Stomach (tissue), 19 donors: ENCODE measurements at regions of chr1 and their contacts with region 1.

Region 1: GRCh38 chr1:165914136-165914798 is 86.9 kb downstream of the UCK2 start:
- DNase-seq: peak; percentile 73 to 93
- H3K4me3 ChIP-seq: no peak overlapping the region
- H3K27ac ChIP-seq: peak overlapping the region in 2 of 5 donors; percentile 56 to 71
- H3K4me1 ChIP-seq: peaks cover 36 to 65% (median 44%) of the 10 kb centered on the region in 4 donors
- H3K27me3 ChIP-seq: no peaks in the 10 kb centered on the region
- CTCF ChIP-seq: peak in 5 of 7 experiments; percentile 68 to 90 (median 86)
- EP300 ChIP-seq: no peak
- POLR2A ChIP-seq: no peak

Region 2: DNA sequence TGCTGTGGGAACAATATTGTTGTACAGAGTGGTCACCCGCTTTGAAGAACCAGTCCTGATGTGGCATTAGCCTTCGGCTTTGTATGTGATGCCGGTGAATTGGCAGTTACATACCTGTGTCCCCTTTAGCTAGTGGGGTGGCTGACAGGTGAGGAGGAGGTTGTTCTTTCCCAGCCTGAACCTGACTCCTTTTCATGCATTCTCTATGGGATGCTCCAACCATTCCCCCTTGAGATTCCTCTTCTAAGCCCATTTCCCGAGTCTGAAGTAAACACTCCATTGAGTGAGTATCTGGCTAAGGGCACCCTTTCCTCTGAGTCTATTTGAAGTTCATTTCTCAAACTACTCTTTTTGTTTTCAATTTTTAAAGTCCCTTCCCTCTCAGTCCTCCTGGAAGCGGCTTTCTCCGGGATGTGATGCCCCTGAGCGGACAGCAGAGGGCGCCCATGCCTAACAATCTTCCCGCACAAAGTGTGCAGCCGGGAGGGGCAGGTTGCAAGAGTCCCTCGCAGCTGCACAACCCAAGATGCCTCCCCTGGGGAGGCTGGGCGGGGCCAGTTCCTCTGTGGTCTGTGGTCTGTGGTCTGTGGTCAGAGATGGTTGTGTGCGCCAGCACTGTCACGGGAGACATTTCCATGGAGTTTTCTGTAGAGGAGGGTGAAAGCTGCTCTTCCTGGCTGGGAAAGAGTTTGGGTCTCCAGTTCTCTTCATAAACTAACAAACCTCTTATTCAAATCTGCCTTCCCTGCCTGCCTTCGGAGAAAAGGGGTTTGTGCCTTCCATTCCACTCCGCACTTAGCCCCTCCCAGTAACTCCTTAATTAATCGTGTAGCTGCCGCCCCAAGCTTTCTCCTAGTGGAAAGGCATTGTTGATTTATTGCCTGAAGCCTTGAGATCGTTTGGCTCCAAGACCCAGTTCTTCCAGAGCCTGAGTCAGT is 521.4 kb before region 1 on chr1:
- intact Hi-C with region 1: loop called (anchors 10 kb)
- DNase-seq: peak; percentile 76 to 93
- H3K4me3 ChIP-seq: peak overlapping the region; percentile 8 to 19 (median 13)
- H3K27ac ChIP-seq: peak overlapping the region in 1 of 5 donors; percentile 11
- H3K4me1 ChIP-seq: peaks cover 0 to 17% (median 14%) of the 10 kb centered on the region in 4 donors
- H3K27me3 ChIP-seq: peaks cover 0 to 50% (median 5%) of the 10 kb centered on the region in 3 donors
- CTCF ChIP-seq: peak in 5 of 7 experiments; percentile 72 to 92 (median 91)
- EP300 ChIP-seq: no peak
- POLR2A ChIP-seq: no peak

Region 3: DNA sequence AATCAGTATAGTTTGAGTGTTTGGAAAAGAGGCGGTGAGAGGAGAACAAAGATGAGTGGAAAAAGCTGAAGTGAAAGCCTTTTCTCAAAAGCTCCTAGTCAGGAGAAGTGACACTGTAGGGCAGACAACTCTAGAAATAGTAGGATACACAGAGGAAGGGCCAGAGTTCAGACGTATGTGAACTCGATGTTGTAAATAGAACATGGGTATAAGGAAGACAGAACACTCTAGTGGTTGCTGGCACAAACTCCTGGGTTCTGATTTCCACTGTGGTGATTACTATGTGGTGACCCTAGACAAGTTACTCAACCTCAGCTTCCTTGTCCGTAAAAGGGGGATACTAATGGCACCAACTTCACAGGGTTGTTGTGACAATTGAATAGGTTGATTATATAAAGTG is 313.5 kb before region 1 on chr1:
- intact Hi-C with region 1: loop called (anchors 5 kb)
- DNase-seq: no peak
- H3K4me3 ChIP-seq: no peak overlapping the region
- H3K27ac ChIP-seq: no peak overlapping the region
- H3K4me1 ChIP-seq: peaks cover 5 to 29% (median 14%) of the 10 kb centered on the region in 4 donors
- H3K27me3 ChIP-seq: no peaks in the 10 kb centered on the region
- CTCF ChIP-seq: no peak
- EP300 ChIP-seq: no peak
- POLR2A ChIP-seq: no peak

Region 4: GRCh38 chr1:165726169-165726568 is 188.1 kb before region 1 on chr1:
- intact Hi-C with region 1: loop called (anchors 10 kb)
- DNase-seq: no peak
- H3K4me3 ChIP-seq: no peak overlapping the region
- H3K27ac ChIP-seq: no peak overlapping the region
- H3K4me1 ChIP-seq: no peaks in the 10 kb centered on the region
- H3K27me3 ChIP-seq: no peaks in the 10 kb centered on the region
- CTCF ChIP-seq: no peak
- EP300 ChIP-seq: no peak
- POLR2A ChIP-seq: no peak

Region 5: DNA sequence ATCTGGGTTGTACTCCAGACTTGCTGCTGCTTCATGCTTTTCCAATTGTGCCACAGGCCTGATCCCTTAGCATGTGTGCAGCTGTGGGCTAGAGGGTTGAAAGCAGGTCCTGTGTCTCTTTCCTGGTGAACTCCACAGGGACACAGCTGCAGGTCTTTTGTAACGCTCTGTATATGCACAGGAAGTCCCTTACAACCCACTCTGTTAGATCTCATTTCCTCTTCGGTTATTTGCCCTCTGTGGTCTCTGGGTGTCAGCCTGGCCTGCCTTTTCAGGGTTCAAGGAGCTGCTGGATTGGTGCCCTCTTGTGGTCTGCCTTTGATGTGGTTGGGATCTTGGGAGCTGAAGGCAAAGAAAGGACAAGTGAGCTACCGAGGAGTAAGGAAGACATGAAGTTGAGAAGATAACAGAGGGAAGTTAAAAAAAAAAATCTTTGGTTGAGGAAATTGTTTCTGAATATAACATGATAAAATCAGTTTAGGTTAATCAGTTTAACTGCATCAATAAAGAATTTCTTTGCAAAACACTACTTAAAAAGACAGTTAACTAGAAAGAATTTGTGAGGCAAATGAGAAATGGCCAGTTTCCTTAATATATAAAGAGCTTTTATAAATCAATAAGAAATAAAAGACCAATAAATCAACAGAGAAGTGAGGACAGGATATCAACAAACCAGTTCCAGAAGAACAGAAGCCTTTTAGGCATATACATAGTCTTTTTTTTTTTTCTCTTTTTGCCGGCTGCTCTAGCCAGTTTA is 42.8 kb before region 1 on chr1:
- intact Hi-C with region 1: no loop called
- DNase-seq: peak; percentile 63 to 71
- H3K4me3 ChIP-seq: no peak overlapping the region
- H3K27ac ChIP-seq: peak overlapping the region in 2 of 5 donors; percentile 2 to 35
- H3K4me1 ChIP-seq: peaks cover 0 to 42% (median 28%) of the 10 kb centered on the region in 4 donors
- H3K27me3 ChIP-seq: no peaks in the 10 kb centered on the region
- CTCF ChIP-seq: peak in 4 of 7 experiments; percentile 8 to 34 (median 22)
- EP300 ChIP-seq: no peak
- POLR2A ChIP-seq: no peak